Activated CD8-positive, alpha-beta T cell treated with anti-CD3 and anti-CD28 coated beads, Interleukin-2, amount 10 ng/mL, durations not matched to agents 7 days and 5 days (primary cell): ENCODE measurements at regions of chr22 and their contacts with region 1.

Region 1: DNA sequence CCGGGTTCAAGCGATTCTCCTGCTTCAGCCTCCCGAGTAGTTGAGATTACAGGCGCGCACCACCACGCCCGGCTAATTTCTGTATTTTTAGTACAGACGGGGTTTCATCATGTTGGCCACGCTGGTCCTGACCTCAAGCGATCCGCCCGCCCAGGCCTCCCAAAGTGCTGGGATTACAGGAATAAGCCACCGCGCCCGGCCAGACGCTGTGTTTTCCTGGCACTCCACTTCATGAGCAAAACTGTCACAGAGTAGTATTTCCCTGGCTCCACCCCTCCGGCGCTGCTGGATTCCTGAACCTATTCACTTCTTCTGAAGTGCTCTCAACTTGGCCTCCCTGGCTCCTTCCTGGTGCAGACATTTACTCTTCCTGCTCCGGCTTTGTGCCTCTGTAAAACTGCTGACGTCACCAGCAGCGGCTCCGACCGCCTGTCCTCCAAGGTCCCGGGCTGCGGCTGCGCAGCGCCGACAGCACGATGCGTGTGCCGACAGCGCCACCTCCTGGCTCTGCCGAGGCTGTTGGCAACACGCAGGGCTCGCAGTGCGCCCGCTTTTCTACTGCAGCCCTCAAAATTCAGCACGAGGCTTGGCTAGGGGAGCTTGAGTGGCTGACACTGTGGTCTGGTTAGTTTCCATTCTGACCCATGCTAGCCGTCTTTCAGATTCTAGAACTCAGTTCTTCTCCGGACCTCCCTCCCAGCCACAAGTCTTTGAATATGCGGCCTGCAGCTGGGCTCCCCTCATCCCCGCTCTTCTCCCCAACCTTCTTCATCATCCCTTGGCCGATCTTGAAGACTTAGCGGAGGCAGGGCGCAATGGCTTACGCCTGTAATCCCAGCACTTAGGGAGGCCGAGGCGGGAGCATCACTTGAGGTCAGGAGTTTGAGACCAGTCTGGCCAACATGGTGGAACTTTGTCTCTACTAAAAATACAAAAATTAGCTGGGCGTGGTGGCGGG is 36.6 kb downstream of the APOL3 start:
- DNase-seq: peak; percentile 95
- ATAC-seq: peak; percentile 100
- H3K4me3 Mint-ChIP-seq: peak overlapping the region; percentile 51
- H3K27ac Mint-ChIP-seq: peak overlapping the region; percentile 78
- H3K4me1 Mint-ChIP-seq: peaks cover 17% of the 10 kb centered on the region
- H3K27me3 Mint-ChIP-seq: peaks cover 9% of the 10 kb centered on the region

Region 2: GRCh38 chr22:35627264-35628041 is 496.5 kb before region 1 on chr22:
- CTCF ChIA-PET with region 1: interaction called, 11 read pairs
- POLR2A ChIA-PET with region 1: no interaction called
- DNase-seq: peak; percentile 66
- ATAC-seq: peak; percentile 48
- H3K4me3 Mint-ChIP-seq: peak overlapping the region; percentile 74
- H3K27ac Mint-ChIP-seq: peak overlapping the region; percentile 53
- H3K4me1 Mint-ChIP-seq: peaks cover 25% of the 10 kb centered on the region
- H3K27me3 Mint-ChIP-seq: peaks cover 8% of the 10 kb centered on the region

Region 3: DNA sequence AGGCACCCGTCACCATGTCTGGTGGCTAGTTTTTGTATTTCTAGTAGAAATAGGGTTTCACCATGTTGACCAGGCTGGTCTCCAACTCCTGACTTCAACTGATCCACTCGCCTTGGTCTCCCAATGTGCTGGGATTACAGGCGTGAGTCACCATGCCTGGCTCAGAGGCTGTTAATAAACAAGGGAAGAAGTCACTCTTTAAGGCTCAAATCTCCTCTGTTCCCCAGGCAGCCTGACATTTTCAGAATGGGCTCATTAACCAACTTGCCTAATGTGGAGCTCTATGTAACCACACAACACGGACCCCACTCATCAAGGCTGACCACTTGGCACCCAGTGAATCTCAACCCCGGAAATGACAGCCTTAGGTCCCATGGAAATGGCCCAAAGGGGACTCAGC is 12.5 kb after region 1 on chr22:
- CTCF ChIA-PET with region 1: interaction called, 15 read pairs
- POLR2A ChIA-PET with region 1: no interaction called
- DNase-seq: no peak
- ATAC-seq: no peak
- H3K4me3 Mint-ChIP-seq: no peak overlapping the region
- H3K27ac Mint-ChIP-seq: no peak overlapping the region
- H3K4me1 Mint-ChIP-seq: peaks cover 8% of the 10 kb centered on the region
- H3K27me3 Mint-ChIP-seq: no peaks in the 10 kb centered on the region

Region 4: GRCh38 chr22:36156515-36157419 is 32.8 kb after region 1 on chr22:
- CTCF ChIA-PET with region 1: interaction called, 10 read pairs
- POLR2A ChIA-PET with region 1: no interaction called
- DNase-seq: peak; percentile 66
- ATAC-seq: peak; percentile 49
- H3K4me3 Mint-ChIP-seq: peak overlapping the region; percentile 97
- H3K27ac Mint-ChIP-seq: peak overlapping the region; percentile 97
- H3K4me1 Mint-ChIP-seq: peaks cover 93% of the 10 kb centered on the region
- H3K27me3 Mint-ChIP-seq: no peaks in the 10 kb centered on the region

Region 5: GRCh38 chr22:36211237-36211861 is 87.4 kb after region 1 on chr22:
- CTCF ChIA-PET with region 1: no interaction called
- POLR2A ChIA-PET with region 1: no interaction called
- DNase-seq: peak; percentile 32
- ATAC-seq: no peak
- H3K4me3 Mint-ChIP-seq: peak overlapping the region; percentile 2
- H3K27ac Mint-ChIP-seq: no peak overlapping the region
- H3K4me1 Mint-ChIP-seq: peaks cover 26% of the 10 kb centered on the region
- H3K27me3 Mint-ChIP-seq: peaks cover 45% of the 10 kb centered on the region

Region 6: DNA sequence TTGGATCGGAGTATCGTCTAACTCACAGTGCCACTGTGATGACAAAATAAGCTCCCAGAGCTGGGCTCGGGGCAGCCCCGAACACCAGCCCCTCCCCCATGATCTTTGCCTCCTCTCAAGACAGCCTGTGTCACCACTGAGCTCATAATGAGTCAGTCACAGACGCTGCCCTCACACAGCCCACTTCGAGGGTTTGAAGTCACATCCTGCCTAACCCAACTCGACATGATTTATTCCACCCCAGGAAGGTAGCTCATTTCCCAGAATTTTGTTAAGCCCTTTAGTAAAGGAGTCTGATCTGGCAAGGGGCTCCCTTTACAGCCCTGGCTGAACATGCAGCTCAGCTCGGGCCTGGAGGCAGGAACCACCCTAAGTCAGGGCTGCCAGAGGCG is 241.1 kb after region 1 on chr22:
- CTCF ChIA-PET with region 1: no interaction called
- POLR2A ChIA-PET with region 1: no interaction called
- DNase-seq: peak; percentile 93
- ATAC-seq: peak; percentile 84
- H3K4me3 Mint-ChIP-seq: peak overlapping the region; percentile 52
- H3K27ac Mint-ChIP-seq: peak overlapping the region; percentile 88
- H3K4me1 Mint-ChIP-seq: peaks cover 97% of the 10 kb centered on the region
- H3K27me3 Mint-ChIP-seq: no peaks in the 10 kb centered on the region